PC-3 (cell line): ENCODE measurements at regions of chrX and their contacts with region 1.

Region 1: GRCh38 chrX:64975989-64976672 is at the start of gene ZC4H2:
- DNase-seq: peak; percentile 80
- ATAC-seq: peak; percentile 98
- H3K4me3 ChIP-seq: peak within 1 kb of the TSS; percentile 85
- H3K27ac ChIP-seq: no peak within 1 kb of the TSS
- H3K4me1 ChIP-seq: peaks cover 8% of the 10 kb centered on the region
- H3K27me3 ChIP-seq: no peaks in the 10 kb centered on the region
- CTCF ChIP-seq: no peak
- total RNA-seq, gene ZC4H2: 11.8 and 12.3 TPM in 2 replicates

Region 2: GRCh38 chrX:65034668-65035445 is 58.7 kb after region 1 on chrX:
- CTCF ChIA-PET with region 1: interaction called, 4 read pairs
- POLR2A ChIA-PET with region 1: no interaction called
- intact Hi-C with region 1: loop called (anchors 1 kb)
- DNase-seq: peak; percentile 82
- ATAC-seq: peak; percentile 87
- H3K4me3 ChIP-seq: peak within 1 kb of the TSS; percentile 71
- H3K27ac ChIP-seq: no peak within 1 kb of the TSS
- H3K4me1 ChIP-seq: peaks cover 7% of the 10 kb centered on the region; the same call in 1 of the 2 replicates
- H3K27me3 ChIP-seq: no peaks in the 10 kb centered on the region
- CTCF ChIP-seq: peak; percentile 56

Region 3: GRCh38 chrX:65196758-65197360 is 220.7 kb after region 1 on chrX:
- CTCF ChIA-PET with region 1: interaction called, 3 read pairs
- POLR2A ChIA-PET with region 1: no interaction called
- intact Hi-C with region 1: loop called (anchors 5 kb)
- DNase-seq: peak; percentile 44
- ATAC-seq: peak; percentile 96
- H3K4me3 ChIP-seq: peak overlapping the region; percentile 50; the same call in 1 of the 2 replicates
- H3K27ac ChIP-seq: no peak overlapping the region
- H3K4me1 ChIP-seq: no peaks in the 10 kb centered on the region
- H3K27me3 ChIP-seq: no peaks in the 10 kb centered on the region
- CTCF ChIP-seq: peak; percentile 36; the same call in 1 of the 2 replicates